Activated CD8-positive, alpha-beta T cell treated with anti-CD3 and anti-CD28 coated beads, Interleukin-2, amount 10 ng/mL, durations not matched to agents 7 days and 5 days (primary cell): ENCODE measurements at regions of chr11 and their contacts with region 1.

Region 1: DNA sequence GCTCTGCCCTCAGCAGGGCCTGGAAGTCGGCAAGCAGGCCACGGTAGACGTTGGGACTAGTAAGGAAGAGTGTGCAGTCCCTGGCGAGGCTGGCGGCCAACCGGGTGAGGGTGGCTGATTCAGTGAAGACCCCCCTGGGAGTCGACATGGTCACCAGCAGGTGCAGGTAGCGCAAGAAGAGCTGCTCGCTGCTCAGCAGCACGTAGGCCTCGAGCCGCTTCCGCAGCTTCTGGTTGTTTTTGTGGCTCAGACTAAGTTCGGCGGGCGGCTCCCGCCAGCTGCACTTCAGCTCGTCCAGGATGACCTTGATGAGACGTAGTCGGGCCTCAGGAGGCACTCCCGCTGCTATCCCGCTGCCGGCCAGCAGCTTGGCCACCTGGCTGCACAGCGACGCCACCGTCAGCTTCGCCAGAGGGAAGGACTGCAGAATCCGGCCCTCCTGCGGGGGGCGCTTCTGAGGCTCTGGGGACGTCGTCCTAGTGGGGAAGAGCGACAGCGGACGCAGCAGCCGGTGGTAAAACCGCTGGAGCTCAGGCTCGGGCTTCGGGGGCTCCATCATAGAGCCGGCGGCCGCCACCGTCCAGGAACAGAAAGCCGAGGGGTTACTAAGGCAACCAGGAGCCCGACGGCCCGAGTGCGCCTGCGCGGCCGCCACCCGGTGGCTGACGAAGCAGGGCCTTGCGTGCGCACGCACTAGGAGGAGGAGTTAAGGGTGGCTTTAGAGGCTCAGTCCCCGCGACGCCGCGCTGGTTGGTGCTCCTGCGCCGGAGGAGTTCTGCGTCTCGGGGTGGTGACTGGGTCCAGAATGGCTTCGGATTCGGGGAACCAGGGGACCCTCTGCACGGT is at the starts of genes CCDC87 and CCS:
- DNase-seq: peak; percentile 99
- ATAC-seq: peak; percentile 97
- H3K4me3 Mint-ChIP-seq: peak within 1 kb of the TSS; percentile 100
- H3K27ac Mint-ChIP-seq: peak within 1 kb of the TSS; percentile 98
- H3K4me1 Mint-ChIP-seq: peaks cover 37% of the 10 kb centered on the region
- H3K27me3 Mint-ChIP-seq: no peaks in the 10 kb centered on the region
- total RNA-seq, gene CCDC87: 0.55 to 0.70 TPM
- total RNA-seq, gene CCS: 29.3 to 32.5 TPM

Region 2: GRCh38 chr11:66545701-66546367 is 46.8 kb before region 1 on chr11 and contains the start of gene ZDHHC24:
- CTCF ChIA-PET with region 1: interaction called, 20 read pairs
- POLR2A ChIA-PET with region 1: no interaction called
- DNase-seq: peak; percentile 91
- ATAC-seq: peak; percentile 88
- H3K4me3 Mint-ChIP-seq: peak within 1 kb of the TSS; percentile 83
- H3K27ac Mint-ChIP-seq: peak within 1 kb of the TSS; percentile 78
- H3K4me1 Mint-ChIP-seq: peaks cover 38% of the 10 kb centered on the region
- H3K27me3 Mint-ChIP-seq: peaks cover 19% of the 10 kb centered on the region
- total RNA-seq, gene ZDHHC24: 15.5 to 15.9 TPM

Region 3: GRCh38 chr11:66579017-66579606 is 13.6 kb before region 1 on chr11:
- CTCF ChIA-PET with region 1: interaction called, 11 read pairs
- POLR2A ChIA-PET with region 1: no interaction called
- DNase-seq: peak; percentile 75
- ATAC-seq: peak; percentile 90
- H3K4me3 Mint-ChIP-seq: no peak overlapping the region
- H3K27ac Mint-ChIP-seq: no peak overlapping the region
- H3K4me1 Mint-ChIP-seq: peaks cover 6% of the 10 kb centered on the region
- H3K27me3 Mint-ChIP-seq: peaks cover 12% of the 10 kb centered on the region

Region 4: GRCh38 chr11:66616379-66617154 is 23.9 kb after region 1 on chr11 and contains the start of gene RBM14:
- CTCF ChIA-PET with region 1: interaction called, 17 read pairs
- POLR2A ChIA-PET with region 1: interaction called, 35 read pairs
- DNase-seq: peak; percentile 99
- ATAC-seq: peak; percentile 92
- H3K4me3 Mint-ChIP-seq: peak within 1 kb of the TSS; percentile 98
- H3K27ac Mint-ChIP-seq: peak within 1 kb of the TSS; percentile 99
- H3K4me1 Mint-ChIP-seq: peaks cover 36% of the 10 kb centered on the region
- H3K27me3 Mint-ChIP-seq: no peaks in the 10 kb centered on the region
- total RNA-seq, gene RBM14: 168 to 182 TPM

Region 5: GRCh38 chr11:66638177-66639065 is 45.7 kb after region 1 on chr11 and contains the start of gene RBM4:
- CTCF ChIA-PET with region 1: interaction called, 17 read pairs
- POLR2A ChIA-PET with region 1: interaction called, 10 read pairs
- DNase-seq: peak; percentile 99
- ATAC-seq: peak; percentile 95
- H3K4me3 Mint-ChIP-seq: peak within 1 kb of the TSS; percentile 98
- H3K27ac Mint-ChIP-seq: peak within 1 kb of the TSS; percentile 98
- H3K4me1 Mint-ChIP-seq: peaks cover 62% of the 10 kb centered on the region
- H3K27me3 Mint-ChIP-seq: no peaks in the 10 kb centered on the region
- total RNA-seq, gene RBM4: 118 to 121 TPM